ENCODE measurements at regions of chr4 and their contacts with region 1.

Region 1: DNA sequence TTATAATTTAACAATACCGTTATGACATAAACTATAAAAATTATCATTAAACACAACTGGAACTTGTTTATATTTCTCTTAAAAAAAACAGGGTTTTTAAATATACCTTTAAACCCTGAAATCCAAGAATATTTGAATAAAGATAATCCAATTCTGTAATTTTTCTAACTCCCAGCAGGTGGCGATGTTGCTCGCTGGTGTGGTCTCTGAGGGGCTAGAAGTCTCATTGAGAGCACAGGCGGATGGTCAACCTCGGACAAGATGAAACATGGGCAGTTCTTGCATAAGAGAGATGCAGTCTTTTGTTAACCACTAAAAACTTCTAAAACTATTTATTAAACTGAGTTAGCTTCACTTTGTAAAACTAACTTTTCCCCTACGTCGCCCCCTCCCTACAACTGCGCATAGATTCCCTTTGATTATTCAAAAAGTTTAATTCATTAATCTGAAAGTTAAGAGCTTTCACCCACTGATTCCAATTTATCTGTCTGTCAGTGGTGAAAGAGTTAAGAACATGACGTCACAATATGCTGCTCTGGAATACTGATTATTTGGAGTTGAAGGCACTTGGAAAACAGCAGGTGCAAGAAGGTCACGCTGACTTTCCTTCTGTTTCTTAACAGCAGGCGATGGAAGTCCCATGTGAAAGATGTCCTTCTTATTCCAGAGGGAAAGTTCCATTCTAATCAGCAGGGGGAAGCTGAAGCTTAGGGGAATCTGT is 29.5 kb downstream of the DMP1 start:
- ATAC-seq: peak in 5 of 8 experiments; percentile 46 to 77 (median 59)
- H3K4me3 ChIP-seq: no peak overlapping the region
- H3K27ac ChIP-seq: no peak overlapping the region
- H3K4me1 ChIP-seq: peaks cover 0 to 3% of the 10 kb centered on the region in 2 donors

Region 2: DNA sequence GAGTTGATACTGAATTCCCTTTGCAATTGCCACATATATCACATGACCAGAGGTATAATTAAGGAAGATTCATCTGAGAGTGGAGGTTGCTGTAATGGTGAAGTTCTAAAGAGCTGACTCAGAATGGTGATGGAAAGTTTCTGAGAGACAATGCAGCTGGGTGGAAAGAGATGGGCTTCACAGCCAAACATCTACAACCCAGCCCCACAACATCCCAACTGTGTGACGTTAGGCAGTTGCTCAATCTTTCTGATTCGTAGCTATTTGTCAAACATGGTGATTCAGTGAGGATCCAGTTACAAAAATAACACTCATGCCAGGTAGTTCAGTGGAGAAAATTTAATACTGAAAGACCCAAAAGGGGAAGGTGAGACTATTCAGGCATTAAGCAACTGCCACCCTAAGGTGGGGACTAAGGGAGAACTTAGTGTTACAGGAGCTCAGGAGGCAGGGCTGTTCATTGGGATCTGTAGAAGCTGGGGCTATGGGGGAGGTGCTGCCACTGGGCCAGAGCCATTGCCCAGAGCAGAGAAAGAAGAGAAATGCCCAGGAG is 751.7 kb before region 1 on chr4:
- in situ Hi-C with region 1: no loop called
- ATAC-seq: peak in 2 of 8 experiments; percentile 82 to 87
- H3K4me3 ChIP-seq: no peak overlapping the region
- H3K27ac ChIP-seq: no peak overlapping the region
- H3K4me1 ChIP-seq: no peaks in the 10 kb centered on the region

Region 3: GRCh38 chr4:87838890-87839591 is 159.4 kb after region 1 on chr4:
- in situ Hi-C with region 1: loop called in 5 of 9 experiments (anchors 5 to 25 kb)
- ATAC-seq: peak; percentile 41 to 89 (median 56)
- H3K4me3 ChIP-seq: no peak overlapping the region
- H3K27ac ChIP-seq: no peak overlapping the region
- H3K4me1 ChIP-seq: peaks cover 3 to 4% of the 10 kb centered on the region in 2 donors

Region 4: DNA sequence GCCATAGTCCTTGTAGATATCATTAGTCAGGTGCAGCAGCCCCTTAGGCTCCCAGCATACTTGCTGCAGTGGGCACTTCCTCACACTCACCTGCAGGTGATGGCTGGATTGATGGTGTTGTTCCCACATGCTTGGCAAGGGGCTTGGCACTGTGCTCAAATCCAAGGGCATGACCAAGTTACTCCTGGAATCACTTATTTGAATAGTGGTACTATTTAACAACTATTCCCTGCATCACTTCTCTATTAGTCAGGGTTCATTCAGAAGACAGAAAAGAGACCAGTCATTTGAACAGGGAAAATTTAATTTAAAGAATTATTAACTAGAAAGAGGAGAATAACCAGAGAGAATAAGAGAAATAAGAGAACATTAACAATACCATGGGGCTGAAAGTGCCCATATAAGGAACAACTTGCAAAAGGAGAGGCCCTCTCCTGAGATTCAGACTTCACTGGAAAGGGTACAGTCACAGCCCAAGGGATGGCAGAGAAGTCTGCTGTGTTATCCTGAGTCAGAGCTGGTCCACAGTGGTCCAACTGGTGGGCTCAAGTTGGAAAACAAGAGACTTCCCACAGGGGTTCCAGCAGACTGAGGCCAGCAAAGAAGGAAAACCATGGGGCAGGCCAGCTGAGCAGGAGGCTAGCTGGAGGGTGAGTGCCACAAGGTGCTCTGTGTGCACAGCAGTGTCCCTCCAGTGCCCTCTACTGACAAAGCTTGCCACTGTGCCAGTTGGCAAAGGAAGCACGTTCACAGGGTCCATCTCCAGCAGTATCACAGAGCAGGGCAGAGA is 305.7 kb after region 1 on chr4:
- in situ Hi-C with region 1: loop called in 1 of 9 experiments (anchors 25 kb)
- ATAC-seq: peak; percentile 89 to 100 (median 96)
- H3K4me3 ChIP-seq: no peak overlapping the region
- H3K27ac ChIP-seq: no peak overlapping the region
- H3K4me1 ChIP-seq: no peaks in the 10 kb centered on the region

Region 5: DNA sequence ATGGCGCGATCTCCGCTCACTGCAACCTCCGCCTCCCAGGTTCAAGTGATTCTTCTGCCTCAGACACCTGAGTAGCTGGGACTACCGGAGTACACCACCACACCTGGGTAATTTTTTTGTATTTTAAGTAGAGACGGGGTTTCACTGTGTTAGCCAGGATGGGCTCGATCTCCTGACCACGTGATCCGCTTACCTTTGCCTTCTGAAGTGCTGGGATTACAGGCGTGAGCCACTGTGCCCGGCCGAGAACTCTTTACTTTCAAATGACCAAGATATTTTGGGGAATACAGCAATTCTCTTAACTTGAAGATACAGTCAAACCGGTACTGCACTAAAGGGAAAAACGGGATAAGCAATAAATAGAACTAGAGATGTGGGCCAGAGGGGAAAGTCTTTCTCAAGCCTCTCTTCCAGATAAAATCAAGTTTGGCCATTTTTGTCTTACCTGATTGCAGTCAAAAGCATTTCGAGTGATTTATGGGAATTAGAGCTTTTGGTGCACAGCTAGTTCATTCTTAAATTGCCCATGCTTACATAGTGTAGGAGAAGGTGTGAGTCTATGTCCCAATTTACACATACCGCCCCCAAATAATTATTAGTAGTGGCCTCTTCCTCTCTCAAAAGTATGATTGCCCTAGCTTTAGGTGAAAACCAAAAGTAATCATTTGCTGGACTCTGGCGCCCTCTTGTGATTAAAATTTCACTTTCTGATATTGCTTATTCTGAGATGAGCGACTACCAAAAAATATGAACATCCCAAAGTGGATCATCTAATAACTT is 532.1 kb after region 1 on chr4:
- in situ Hi-C with region 1: loop called in 2 of 9 experiments (anchors 25 kb)
- ATAC-seq: peak in 7 of 8 experiments; percentile 33 to 69 (median 52)
- H3K4me3 ChIP-seq: no peak overlapping the region
- H3K27ac ChIP-seq: no peak overlapping the region
- H3K4me1 ChIP-seq: no peaks in the 10 kb centered on the region

Measured in motor neuron (in vitro differentiated cells).